MCF 10A (cell line): ENCODE measurements at regions of chr2 and their contacts with region 1.

Region 1: GRCh38 chr2:168455648-168456520 is at the start of gene CERS6:
- DNase-seq: peak; percentile 96
- H3K4me3 Mint-ChIP-seq: no peak within 1 kb of the TSS
- H3K27ac Mint-ChIP-seq: peak within 1 kb of the TSS; percentile 28
- H3K4me1 Mint-ChIP-seq: peaks cover 14% of the 10 kb centered on the region
- H3K27me3 Mint-ChIP-seq: no peaks in the 10 kb centered on the region
- CTCF ChIP-seq: no peak
- total RNA-seq, gene CERS6: 24.3 and 27.4 TPM in 2 replicates

Region 2: DNA sequence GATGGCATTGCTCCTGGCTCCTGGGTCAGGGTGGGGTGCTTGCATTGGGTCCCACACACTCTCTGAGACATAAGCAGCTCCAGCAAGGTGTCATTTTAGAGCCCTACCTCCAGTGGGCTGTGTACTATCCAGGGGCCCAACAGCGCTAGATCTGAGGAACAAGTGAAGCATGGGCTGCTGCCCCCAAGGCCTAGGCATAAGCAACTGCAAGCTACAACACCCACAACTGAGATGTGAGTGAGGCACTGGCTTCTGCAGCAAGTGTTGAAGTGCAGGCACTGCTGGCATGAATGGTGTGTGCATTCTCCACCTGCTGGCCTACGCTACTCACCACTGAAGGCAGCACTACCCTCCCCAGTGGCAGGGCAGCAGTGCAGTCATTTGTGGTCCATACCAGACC is 127.5 kb before region 1 on chr2:
- CTCF ChIA-PET with region 1: no interaction called
- POLR2A ChIA-PET with region 1: no interaction called
- intact Hi-C with region 1: no loop called
- DNase-seq: no peak
- H3K4me3 Mint-ChIP-seq: no peak overlapping the region
- H3K27ac Mint-ChIP-seq: no peak overlapping the region
- H3K4me1 Mint-ChIP-seq: no peaks in the 10 kb centered on the region
- H3K27me3 Mint-ChIP-seq: no peaks in the 10 kb centered on the region
- CTCF ChIP-seq: no peak

Region 3: GRCh38 chr2:168346725-168347477 is 109.0 kb before region 1 on chr2:
- CTCF ChIA-PET with region 1: interaction called, 3 read pairs
- POLR2A ChIA-PET with region 1: interaction called, 3 read pairs
- intact Hi-C with region 1: loop called (anchors 2 kb)
- DNase-seq: peak; percentile 75
- H3K4me3 Mint-ChIP-seq: peak overlapping the region; percentile 75
- H3K27ac Mint-ChIP-seq: peak overlapping the region; percentile 65
- H3K4me1 Mint-ChIP-seq: peaks cover 14% of the 10 kb centered on the region
- H3K27me3 Mint-ChIP-seq: no peaks in the 10 kb centered on the region
- CTCF ChIP-seq: peak; percentile 83

Region 4: DNA sequence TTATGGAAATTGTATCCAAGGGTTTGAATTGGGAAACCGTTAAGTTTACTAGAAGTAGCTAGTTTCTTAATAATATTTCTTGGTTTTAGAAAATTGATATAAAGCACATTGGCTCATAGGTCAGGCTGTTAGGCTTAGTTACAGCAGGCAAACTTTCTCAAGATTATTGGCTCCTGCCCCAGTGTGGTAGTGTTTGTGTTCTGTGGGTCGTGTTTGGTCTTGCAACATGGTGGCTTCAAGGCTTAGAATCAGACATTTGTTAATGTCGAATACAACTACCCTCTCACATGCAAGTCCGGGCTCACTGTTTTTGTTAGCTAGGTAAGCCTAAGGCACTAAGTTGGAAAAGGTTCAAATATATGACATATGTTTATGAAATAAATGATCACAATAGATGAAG is 19.8 kb after region 1 on chr2:
- CTCF ChIA-PET with region 1: no interaction called
- POLR2A ChIA-PET with region 1: interaction called, 19 read pairs
- intact Hi-C with region 1: no loop called
- DNase-seq: peak; percentile 82
- H3K4me3 Mint-ChIP-seq: peak overlapping the region; percentile 39
- H3K27ac Mint-ChIP-seq: peak overlapping the region; percentile 40
- H3K4me1 Mint-ChIP-seq: peaks cover 24% of the 10 kb centered on the region
- H3K27me3 Mint-ChIP-seq: no peaks in the 10 kb centered on the region
- CTCF ChIP-seq: no peak

Region 5: DNA sequence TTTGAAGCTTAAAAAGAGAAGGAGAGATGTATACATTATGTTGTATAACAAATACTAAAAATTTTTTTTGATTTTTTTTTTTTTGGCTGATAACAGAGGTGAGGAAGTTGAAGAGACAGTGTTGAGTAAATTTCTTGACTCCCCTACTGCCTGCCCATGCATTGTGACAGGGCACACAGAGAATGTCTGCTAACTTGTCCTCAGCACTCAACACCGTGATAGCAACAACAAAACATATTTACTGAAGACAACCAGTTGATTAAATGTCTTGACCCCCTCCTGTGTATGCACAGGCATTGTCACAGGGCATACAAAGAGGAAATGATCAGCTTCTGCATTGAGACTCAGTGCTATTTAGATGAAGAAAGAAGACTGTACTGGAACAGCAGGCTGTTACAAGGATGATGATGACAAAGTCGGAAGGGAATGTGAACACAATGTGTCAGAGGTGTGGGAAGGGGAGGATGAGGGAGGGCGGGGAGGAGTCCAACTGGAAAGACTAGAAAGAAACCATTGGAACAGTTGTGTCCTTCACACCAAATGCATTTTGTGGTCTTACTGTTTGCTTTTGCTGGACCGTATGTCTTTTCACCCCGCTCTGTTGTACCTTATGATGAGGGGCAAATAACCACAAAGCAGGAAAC is 89.7 kb after region 1 on chr2:
- CTCF ChIA-PET with region 1: interaction called, 3 read pairs
- POLR2A ChIA-PET with region 1: interaction called, 4 read pairs
- intact Hi-C with region 1: loop called (anchors 5 kb)
- DNase-seq: peak; percentile 84
- H3K4me3 Mint-ChIP-seq: peak overlapping the region; percentile 19
- H3K27ac Mint-ChIP-seq: peak overlapping the region; percentile 92
- H3K4me1 Mint-ChIP-seq: peaks cover 38% of the 10 kb centered on the region
- H3K27me3 Mint-ChIP-seq: no peaks in the 10 kb centered on the region
- CTCF ChIP-seq: no peak

Region 6: DNA sequence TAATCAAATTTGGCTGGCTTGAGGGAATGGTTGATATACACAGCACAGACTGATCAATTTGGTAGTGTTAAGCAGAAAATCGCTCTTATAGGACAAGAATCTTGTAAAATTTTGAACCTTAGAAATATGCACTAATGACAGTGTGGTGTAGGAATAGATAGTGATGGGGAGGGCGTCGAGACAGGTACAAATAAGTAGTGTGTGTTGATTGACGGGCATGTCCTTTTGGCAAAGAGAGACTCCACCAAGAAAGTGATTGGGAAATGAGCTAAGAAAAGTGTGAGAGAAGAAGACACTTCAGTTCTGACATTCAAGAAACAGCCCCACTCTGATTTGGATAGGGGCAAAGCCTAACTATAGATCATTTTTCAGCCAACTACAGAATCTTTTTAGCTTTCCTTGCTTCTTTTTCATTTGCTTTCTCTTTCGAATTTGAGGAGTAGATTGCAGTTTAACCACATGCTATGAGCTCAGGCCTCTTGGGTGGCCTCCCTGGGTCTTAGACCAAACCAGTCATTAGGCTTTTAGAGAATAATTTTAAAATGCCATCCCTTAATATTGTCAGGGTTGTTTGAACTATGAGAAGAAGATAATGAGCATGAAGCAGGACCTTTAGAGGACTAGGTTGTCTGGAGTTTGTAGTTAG is 127.3 kb after region 1 on chr2:
- CTCF ChIA-PET with region 1: no interaction called
- POLR2A ChIA-PET with region 1: interaction called, 4 read pairs
- intact Hi-C with region 1: loop called (anchors 1 kb)
- DNase-seq: peak; percentile 22
- H3K4me3 Mint-ChIP-seq: peak overlapping the region; percentile 17
- H3K27ac Mint-ChIP-seq: peak overlapping the region; percentile 92
- H3K4me1 Mint-ChIP-seq: peaks cover 38% of the 10 kb centered on the region
- H3K27me3 Mint-ChIP-seq: no peaks in the 10 kb centered on the region
- CTCF ChIP-seq: no peak

Region 7: DNA sequence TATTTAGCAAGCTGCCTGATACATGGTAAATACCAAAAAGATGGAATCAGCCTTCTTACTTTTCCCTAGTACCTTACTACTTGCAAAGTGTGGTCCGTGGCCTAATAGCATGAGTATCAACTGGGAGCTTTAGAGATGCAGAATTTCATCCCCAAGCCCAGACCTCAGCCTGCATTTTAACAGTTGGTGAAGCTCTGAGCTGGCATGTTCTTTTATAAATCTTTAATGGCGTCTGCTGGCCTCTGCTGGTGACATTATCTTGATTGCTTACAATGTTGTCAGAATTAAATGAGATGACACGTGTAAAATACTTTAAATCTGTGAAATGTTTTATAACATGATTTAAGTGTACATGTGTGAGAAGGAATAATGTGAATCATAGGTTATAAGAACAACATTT is 231.4 kb after region 1 on chr2:
- CTCF ChIA-PET with region 1: interaction called, 3 read pairs
- POLR2A ChIA-PET with region 1: interaction called, 4 read pairs
- intact Hi-C with region 1: loop called (anchors 2 kb)
- DNase-seq: peak; percentile 34
- H3K4me3 Mint-ChIP-seq: no peak overlapping the region
- H3K27ac Mint-ChIP-seq: no peak overlapping the region
- H3K4me1 Mint-ChIP-seq: peaks cover 10% of the 10 kb centered on the region
- H3K27me3 Mint-ChIP-seq: no peaks in the 10 kb centered on the region
- CTCF ChIP-seq: peak; percentile 13